ENCODE measurements at regions of chr9 and their contacts with region 1.

Region 1: GRCh38 chr9:17719053-17719452 is 140.2 kb downstream of the SH3GL2 start:
- DNase-seq: no peak
- H3K4me3 ChIP-seq: no peak overlapping the region
- H3K27ac ChIP-seq: no peak overlapping the region
- H3K4me1 ChIP-seq: no peaks in the 10 kb centered on the region
- CTCF ChIP-seq: no peak

Region 2: DNA sequence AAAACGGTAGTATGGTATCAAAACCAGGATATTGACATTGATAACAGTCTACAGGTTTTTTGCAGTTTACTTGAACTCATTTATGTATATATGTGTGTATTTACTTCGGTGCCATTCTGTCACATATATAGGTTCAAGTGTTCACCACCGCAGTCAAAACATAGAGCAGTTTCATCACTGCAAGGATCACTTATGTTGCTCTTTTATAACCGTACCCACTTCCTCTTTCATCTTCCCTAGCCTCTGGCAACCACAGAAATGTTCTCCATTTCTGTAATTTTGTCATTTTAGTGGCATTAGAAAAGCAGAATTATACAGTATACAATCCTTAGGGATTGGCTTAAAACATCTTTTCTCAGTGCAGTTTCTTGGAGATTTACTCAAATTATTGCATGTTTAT is 49.8 kb before region 1 on chr9:
- CTCF ChIA-PET with region 1: no interaction called
- POLR2A ChIA-PET with region 1: no interaction called
- intact Hi-C with region 1: loop called (anchors 5 kb)
- DNase-seq: no peak
- H3K4me3 ChIP-seq: no peak overlapping the region
- H3K27ac ChIP-seq: no peak overlapping the region
- H3K4me1 ChIP-seq: no peaks in the 10 kb centered on the region
- CTCF ChIP-seq: no peak

Region 3: GRCh38 chr9:17730899-17731298 is 11.8 kb after region 1 on chr9:
- CTCF ChIA-PET with region 1: no interaction called
- POLR2A ChIA-PET with region 1: no interaction called
- intact Hi-C with region 1: no loop called
- DNase-seq: no peak
- H3K4me3 ChIP-seq: no peak overlapping the region
- H3K27ac ChIP-seq: no peak overlapping the region
- H3K4me1 ChIP-seq: no peaks in the 10 kb centered on the region
- CTCF ChIP-seq: no peak